ENCODE measurements at regions of chr11 and their contacts with region 1.

Region 1: DNA sequence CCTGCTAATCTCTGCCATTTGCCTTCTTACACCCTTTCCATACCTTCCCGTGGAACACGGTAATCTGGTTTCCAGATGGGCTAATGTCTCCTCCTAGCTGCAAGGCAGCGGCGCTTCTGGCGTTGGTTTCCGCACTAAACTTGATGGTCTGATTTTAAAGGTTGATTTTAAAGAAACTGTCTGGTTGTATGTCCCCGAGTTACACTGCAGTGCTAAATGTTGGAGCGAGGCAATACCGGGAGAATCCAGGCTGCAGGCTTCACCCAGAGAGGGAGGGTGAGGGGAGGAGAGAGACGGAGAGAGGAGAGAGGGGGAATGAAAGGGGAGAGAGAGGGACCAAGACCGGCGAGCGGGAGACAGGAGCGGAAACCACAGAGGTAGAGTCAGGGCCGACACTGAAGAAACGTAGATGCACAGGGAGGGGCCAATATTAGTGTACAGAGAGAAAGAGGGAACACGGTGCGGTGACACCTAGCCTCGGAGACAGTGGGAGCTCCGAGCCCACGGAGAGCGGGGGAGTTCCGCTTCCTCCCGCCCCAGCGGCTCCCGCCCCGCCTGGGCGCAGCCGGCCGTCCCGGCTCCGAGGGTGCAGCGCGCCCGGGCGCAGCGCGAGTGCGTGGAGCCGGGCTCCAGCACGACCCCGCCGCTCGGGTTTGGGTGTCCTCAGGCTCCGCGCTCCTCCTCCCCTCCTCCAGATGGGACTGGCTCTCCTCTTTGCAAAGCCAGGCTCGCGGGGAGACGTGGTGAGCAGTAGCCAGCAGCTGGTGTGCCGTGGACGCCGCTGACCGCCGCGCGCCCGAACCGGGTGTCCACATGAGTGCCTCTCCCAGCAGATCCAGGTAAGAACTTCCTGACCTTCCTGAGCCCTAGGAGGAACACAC is 71.9 kb upstream of the GRAMD1B start:
- DNase-seq: peak; percentile 38
- ATAC-seq: peak; percentile 92
- H3K4me3 Mint-ChIP-seq: peak overlapping the region; percentile 85
- H3K27ac Mint-ChIP-seq: no peak overlapping the region
- H3K4me1 Mint-ChIP-seq: peaks cover 12% of the 10 kb centered on the region
- H3K27me3 Mint-ChIP-seq: peaks cover 67% of the 10 kb centered on the region
- CTCF ChIP-seq: no peak

Region 2: GRCh38 chr11:123011510-123011909 is 346.7 kb before region 1 on chr11:
- CTCF ChIA-PET with region 1: no interaction called
- POLR2A ChIA-PET with region 1: no interaction called
- DNase-seq: no peak
- ATAC-seq: peak; percentile 59
- H3K4me3 Mint-ChIP-seq: no peak overlapping the region
- H3K27ac Mint-ChIP-seq: no peak overlapping the region
- H3K4me1 Mint-ChIP-seq: peaks cover 20% of the 10 kb centered on the region
- H3K27me3 Mint-ChIP-seq: peaks cover 2% of the 10 kb centered on the region; the same call in 1 of the 2 replicates
- CTCF ChIP-seq: no peak

Region 3: DNA sequence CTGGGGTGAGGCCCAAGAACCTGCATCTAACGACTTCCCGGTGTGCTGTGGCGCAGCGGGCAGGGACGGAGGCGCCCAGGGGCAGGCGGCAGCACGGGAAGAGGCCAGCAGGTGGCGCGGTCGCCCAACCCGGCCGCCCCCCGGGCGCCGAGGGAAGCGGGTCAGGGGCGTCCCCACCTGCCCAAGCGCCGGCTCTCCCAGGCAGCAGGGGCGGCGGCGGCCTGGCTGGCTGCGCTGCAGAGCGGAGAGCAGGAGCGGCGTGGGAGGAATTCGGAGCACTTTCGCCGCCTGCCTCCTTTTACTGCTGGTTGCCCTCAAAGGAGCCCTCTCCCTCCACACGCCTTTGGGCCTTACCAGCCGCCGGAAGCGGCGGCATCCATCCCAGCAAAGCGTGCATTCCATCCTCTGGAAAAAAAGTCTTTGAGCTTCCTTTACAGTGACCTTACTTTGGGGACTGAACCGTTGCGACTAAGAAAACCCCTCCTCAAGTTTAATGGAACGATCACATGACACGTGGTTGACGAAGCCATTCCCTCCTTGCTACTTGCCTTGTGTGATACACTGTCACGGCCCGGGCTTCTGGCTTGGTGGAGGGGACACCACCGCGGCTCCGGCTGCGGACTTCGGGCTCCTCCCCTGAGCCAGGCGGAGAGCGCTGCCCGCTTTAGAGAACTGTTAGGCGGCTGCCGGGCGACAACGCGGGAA is 56.4 kb before region 1 on chr11:
- CTCF ChIA-PET with region 1: interaction called, 12 read pairs
- POLR2A ChIA-PET with region 1: no interaction called
- DNase-seq: peak; percentile 83
- ATAC-seq: peak; percentile 77
- H3K4me3 Mint-ChIP-seq: peak overlapping the region; percentile 82
- H3K27ac Mint-ChIP-seq: no peak overlapping the region
- H3K4me1 Mint-ChIP-seq: peaks cover 25% of the 10 kb centered on the region
- H3K27me3 Mint-ChIP-seq: peaks cover 27% of the 10 kb centered on the region
- CTCF ChIP-seq: peak; percentile 85

Measured in WTC11 (cell line).